ENCODE measurements at regions of chr9 and their contacts with region 1.

Region 1: GRCh38 chr9:115808108-115808507 is 345.5 kb upstream of the PAPPA start:
- DNase-seq: no peak
- H3K4me3 Mint-ChIP-seq: no peak overlapping the region
- H3K27ac Mint-ChIP-seq: no peak overlapping the region
- H3K4me1 Mint-ChIP-seq: no peaks in the 10 kb centered on the region
- H3K27me3 Mint-ChIP-seq: no peaks in the 10 kb centered on the region

Region 2: GRCh38 chr9:115855458-115856133 is 47.5 kb after region 1 on chr9:
- intact Hi-C with region 1: loop called (anchors 2 kb)
- DNase-seq: no peak
- H3K4me3 Mint-ChIP-seq: no peak overlapping the region
- H3K27ac Mint-ChIP-seq: no peak overlapping the region
- H3K4me1 Mint-ChIP-seq: no peaks in the 10 kb centered on the region
- H3K27me3 Mint-ChIP-seq: no peaks in the 10 kb centered on the region

Measured in activated CD4-positive, alpha-beta T cell treated with anti-CD3 and anti-CD28 coated beads, Interleukin-2, amount 10 ng/mL, durations not matched to agents 24 days and 14 days (primary cell).